SK-N-SH (cell line): ENCODE measurements at regions of chr7 and their contacts with region 1.

Region 1: GRCh38 chr7:101681170-101682007 is 52.3 kb upstream of the MYL10 start:
- DNase-seq: peak; percentile 94
- H3K4me3 ChIP-seq: peak overlapping the region in 1 of 2 experiments; percentile 35; a peak in 1 of 4 replicates
- H3K27ac ChIP-seq: peak overlapping the region; percentile 34 to 88
- H3K4me1 ChIP-seq: peaks cover 15% of the 10 kb centered on the region in 2 experiments; a peak in 3 of 4 replicates
- H3K27me3 ChIP-seq: no peaks in the 10 kb centered on the region
- CTCF ChIP-seq: no peak
- EP300 ChIP-seq: peak; percentile 53 to 62; a peak in 3 of 4 replicates
- RAD21 ChIP-seq: peak; percentile 32; the same call in 1 of the 2 replicates

Region 2: GRCh38 chr7:101650579-101651081 is 30.8 kb before region 1 on chr7:
- CTCF ChIA-PET with region 1: no interaction called
- POLR2A ChIA-PET with region 1: no interaction called
- DNase-seq: no peak
- H3K4me3 ChIP-seq: no peak overlapping the region; a peak in 1 of 4 replicates
- H3K27ac ChIP-seq: no peak overlapping the region
- H3K4me1 ChIP-seq: no peaks in the 10 kb centered on the region
- H3K27me3 ChIP-seq: no peaks in the 10 kb centered on the region
- CTCF ChIP-seq: no peak
- EP300 ChIP-seq: no peak
- RAD21 ChIP-seq: no peak

Region 3: GRCh38 chr7:101669307-101669706 is 12.1 kb before region 1 on chr7:
- CTCF ChIA-PET with region 1: interaction called, 10 read pairs
- POLR2A ChIA-PET with region 1: interaction called, 4 read pairs
- DNase-seq: no peak
- H3K4me3 ChIP-seq: no peak overlapping the region
- H3K27ac ChIP-seq: no peak overlapping the region
- H3K4me1 ChIP-seq: peaks cover 0 to 12% of the 10 kb centered on the region in 2 experiments; a peak in 1 of 4 replicates
- H3K27me3 ChIP-seq: no peaks in the 10 kb centered on the region
- CTCF ChIP-seq: peak; percentile 54
- EP300 ChIP-seq: no peak
- RAD21 ChIP-seq: no peak